ENCODE measurements at regions of chr14 and their contacts with region 1.

Region 1: GRCh38 chr14:93033983-93034670 is 81.6 kb downstream of the ITPK1 start:
- DNase-seq: peak; percentile 19 to 82 (median 65)
- ATAC-seq: peak; percentile 89
- H3K4me3 ChIP-seq: peak overlapping the region in 1 of 2 experiments; percentile 38
- H3K4me3 Mint-ChIP-seq: peak overlapping the region; percentile 77
- H3K27ac ChIP-seq: peak overlapping the region; percentile 49 to 54
- H3K27ac Mint-ChIP-seq: peak overlapping the region; percentile 88
- H3K4me1 ChIP-seq: peaks cover 29% of the 10 kb centered on the region
- H3K4me1 Mint-ChIP-seq: peaks cover 36% of the 10 kb centered on the region
- H3K27me3 ChIP-seq: no peaks in the 10 kb centered on the region
- H3K27me3 Mint-ChIP-seq: no peaks in the 10 kb centered on the region
- CTCF ChIP-seq: peak; percentile 74

Region 2: DNA sequence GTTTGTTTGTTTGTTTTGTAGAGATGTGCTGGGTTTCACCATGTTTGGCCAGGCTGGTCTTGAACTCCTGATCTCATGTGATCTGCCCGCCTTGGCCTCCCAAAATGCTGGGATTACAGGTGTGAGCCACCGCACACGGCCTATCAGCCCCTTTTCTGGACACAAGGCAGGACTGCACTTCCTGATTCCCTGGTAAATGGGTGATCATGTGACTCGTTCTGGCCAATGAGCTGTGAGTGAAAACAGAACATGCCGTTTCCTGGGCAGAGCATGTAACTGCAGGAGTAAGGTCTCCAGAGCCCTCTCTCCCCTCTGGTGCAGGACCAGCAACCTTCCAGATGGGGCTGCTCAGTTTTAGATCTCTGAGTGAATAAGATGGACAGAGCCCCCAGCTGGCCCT is 11.1 kb before region 1 on chr14:
- CTCF ChIA-PET with region 1: interaction called, 15 read pairs
- POLR2A ChIA-PET with region 1: no interaction called
- intact Hi-C with region 1: no loop called
- DNase-seq: peak in 1 of 9 experiments; percentile 27
- ATAC-seq: no peak
- H3K4me3 ChIP-seq: no peak overlapping the region
- H3K4me3 Mint-ChIP-seq: no peak overlapping the region
- H3K27ac ChIP-seq: no peak overlapping the region
- H3K27ac Mint-ChIP-seq: peak overlapping the region; percentile 22
- H3K4me1 ChIP-seq: peaks cover 21% of the 10 kb centered on the region
- H3K4me1 Mint-ChIP-seq: peaks cover 35% of the 10 kb centered on the region
- H3K27me3 ChIP-seq: no peaks in the 10 kb centered on the region
- H3K27me3 Mint-ChIP-seq: no peaks in the 10 kb centered on the region
- CTCF ChIP-seq: no peak

Region 3: DNA sequence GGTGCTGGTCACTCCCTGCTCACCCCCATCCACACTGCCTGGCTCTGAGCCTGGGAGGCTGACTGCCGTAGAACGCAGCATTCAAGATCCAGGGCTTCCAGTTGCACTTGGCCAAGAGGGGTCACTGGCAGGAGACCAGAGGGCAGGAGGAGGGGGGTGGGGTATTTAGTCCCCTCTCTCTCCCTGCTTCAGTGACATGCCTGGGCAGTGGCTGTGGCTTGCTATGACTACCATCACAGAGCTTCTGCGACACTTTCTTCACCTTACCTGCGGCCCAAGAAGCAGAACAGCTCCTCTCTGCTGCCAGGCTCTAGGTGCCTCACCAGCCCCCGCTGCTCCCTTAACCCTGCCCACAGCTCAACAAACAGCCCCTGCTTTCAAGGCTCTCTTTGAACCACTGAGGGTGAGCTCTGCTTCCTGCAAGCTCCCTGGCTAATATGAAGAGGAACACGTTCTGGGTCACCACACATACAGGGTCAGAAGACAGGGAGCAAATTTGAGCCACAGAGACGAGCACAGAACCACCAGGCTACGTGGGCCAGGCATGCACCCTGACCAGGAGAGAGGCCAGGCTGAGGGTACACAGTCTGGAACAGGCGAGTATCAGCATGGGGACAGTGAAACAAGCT is 25.9 kb after region 1 on chr14:
- CTCF ChIA-PET with region 1: interaction called, 17 read pairs
- POLR2A ChIA-PET with region 1: no interaction called
- intact Hi-C with region 1: no loop called
- DNase-seq: peak in 7 of 9 experiments; percentile 24 to 74 (median 37)
- ATAC-seq: peak; percentile 85
- H3K4me3 ChIP-seq: peak overlapping the region in 1 of 2 experiments; percentile 37
- H3K4me3 Mint-ChIP-seq: peak overlapping the region; percentile 58
- H3K27ac ChIP-seq: peak overlapping the region; percentile 21 to 36
- H3K27ac Mint-ChIP-seq: peak overlapping the region; percentile 92
- H3K4me1 ChIP-seq: peaks cover 66% of the 10 kb centered on the region
- H3K4me1 Mint-ChIP-seq: peaks cover 71% of the 10 kb centered on the region
- H3K27me3 ChIP-seq: no peaks in the 10 kb centered on the region
- H3K27me3 Mint-ChIP-seq: no peaks in the 10 kb centered on the region
- CTCF ChIP-seq: no peak

Region 4: DNA sequence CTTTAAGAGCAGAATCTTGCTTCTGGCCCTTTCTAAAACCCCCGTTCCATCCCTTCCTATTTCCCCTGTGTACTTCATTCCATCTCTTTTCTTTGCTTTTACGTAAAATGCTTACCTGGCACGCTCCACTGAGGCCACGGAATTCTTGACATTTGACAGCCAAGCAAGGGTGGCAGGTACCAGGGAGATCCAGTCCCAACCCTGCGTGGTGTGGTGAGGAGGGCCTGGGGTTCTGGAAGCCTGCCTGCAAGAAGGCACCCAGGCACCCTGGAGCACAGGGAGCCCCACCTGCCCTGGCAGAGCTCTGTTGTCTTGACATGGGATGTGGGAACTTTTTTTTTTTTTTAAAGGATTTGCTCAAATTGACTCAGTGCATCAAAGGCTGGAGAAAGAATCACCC is 33.0 kb after region 1 on chr14:
- CTCF ChIA-PET with region 1: interaction called, 17 read pairs
- POLR2A ChIA-PET with region 1: no interaction called
- intact Hi-C with region 1: loop called in 1 of 2 experiments (anchors 2 kb)
- DNase-seq: no peak
- ATAC-seq: no peak
- H3K4me3 ChIP-seq: no peak overlapping the region
- H3K4me3 Mint-ChIP-seq: peak overlapping the region; percentile 79
- H3K27ac ChIP-seq: peak overlapping the region; percentile 57 to 74
- H3K27ac Mint-ChIP-seq: peak overlapping the region; percentile 91
- H3K4me1 ChIP-seq: peaks cover 58% of the 10 kb centered on the region
- H3K4me1 Mint-ChIP-seq: peaks cover 73% of the 10 kb centered on the region
- H3K27me3 ChIP-seq: no peaks in the 10 kb centered on the region
- H3K27me3 Mint-ChIP-seq: no peaks in the 10 kb centered on the region
- CTCF ChIP-seq: no peak

Region 5: DNA sequence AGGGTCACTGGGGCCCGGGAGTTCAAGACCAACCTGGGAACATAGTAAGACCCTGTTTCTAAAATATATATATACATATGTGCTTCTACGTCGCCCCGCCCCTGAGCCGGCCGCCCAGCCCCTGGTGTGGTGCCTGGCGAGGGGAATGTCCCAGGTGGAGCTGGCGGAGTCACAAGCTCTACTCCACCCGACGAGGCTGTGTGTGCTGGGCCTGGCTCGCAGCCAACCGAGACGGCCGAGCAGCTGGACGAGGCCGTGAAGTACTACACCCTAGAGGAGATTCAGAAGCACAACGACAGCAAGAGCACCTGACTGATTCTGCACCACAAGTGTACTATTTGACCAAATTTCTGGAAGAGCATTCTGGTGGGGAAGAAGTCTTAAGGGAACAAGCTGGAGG is 103.7 kb after region 1 on chr14:
- CTCF ChIA-PET with region 1: interaction called, 9 read pairs
- POLR2A ChIA-PET with region 1: no interaction called
- intact Hi-C with region 1: loop called (anchors 1 kb)
- DNase-seq: no peak
- ATAC-seq: no peak
- H3K4me3 ChIP-seq: no peak overlapping the region
- H3K4me3 Mint-ChIP-seq: no peak overlapping the region
- H3K27ac ChIP-seq: no peak overlapping the region
- H3K27ac Mint-ChIP-seq: no peak overlapping the region
- H3K4me1 ChIP-seq: no peaks in the 10 kb centered on the region
- H3K4me1 Mint-ChIP-seq: peaks cover 2% of the 10 kb centered on the region
- H3K27me3 ChIP-seq: no peaks in the 10 kb centered on the region
- H3K27me3 Mint-ChIP-seq: no peaks in the 10 kb centered on the region
- CTCF ChIP-seq: no peak

Region 6: DNA sequence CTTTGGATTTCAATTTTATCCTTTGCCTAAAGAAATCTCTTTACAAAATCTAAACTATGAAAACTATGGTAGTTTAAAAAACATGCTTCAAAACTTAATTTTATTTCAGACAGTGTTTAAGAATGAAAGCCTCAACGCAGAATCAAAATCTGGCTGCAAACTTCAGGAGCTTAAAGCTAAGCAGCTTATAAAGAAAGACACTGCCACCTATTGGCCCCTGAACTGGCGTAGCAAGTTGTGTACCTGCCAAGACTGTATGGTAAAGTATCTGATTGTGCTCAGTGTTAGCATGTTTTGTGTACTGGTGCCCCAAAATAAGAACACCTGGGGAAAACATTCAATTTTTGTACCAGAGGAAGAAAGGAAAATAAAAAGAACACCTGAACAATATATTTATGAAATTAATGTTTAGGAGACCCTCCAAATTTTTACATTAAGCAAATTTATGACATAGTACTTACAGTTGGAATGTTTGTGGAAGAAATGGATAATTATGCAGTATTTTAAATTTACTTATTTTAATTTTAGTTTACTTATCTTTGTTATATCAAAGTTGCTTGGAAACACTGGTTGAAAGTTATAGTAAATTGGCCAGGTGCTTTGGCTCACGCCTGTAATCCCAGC is 185.1 kb after region 1 on chr14:
- CTCF ChIA-PET with region 1: interaction called, 3 read pairs
- POLR2A ChIA-PET with region 1: no interaction called
- intact Hi-C with region 1: loop called (anchors 1 kb)
- DNase-seq: peak in 5 of 9 experiments; percentile 47 to 77 (median 65)
- ATAC-seq: peak; percentile 84
- H3K4me3 ChIP-seq: no peak overlapping the region
- H3K4me3 Mint-ChIP-seq: no peak overlapping the region
- H3K27ac ChIP-seq: no peak overlapping the region
- H3K27ac Mint-ChIP-seq: no peak overlapping the region
- H3K4me1 ChIP-seq: no peaks in the 10 kb centered on the region
- H3K4me1 Mint-ChIP-seq: no peaks in the 10 kb centered on the region
- H3K27me3 ChIP-seq: no peaks in the 10 kb centered on the region
- H3K27me3 Mint-ChIP-seq: no peaks in the 10 kb centered on the region
- CTCF ChIP-seq: peak; percentile 76

Measured in CD8-positive, alpha-beta T cell (primary cell).